GM12878 (cell line): ENCODE measurements at regions of chr2 and their contacts with region 1.

Region 1: DNA sequence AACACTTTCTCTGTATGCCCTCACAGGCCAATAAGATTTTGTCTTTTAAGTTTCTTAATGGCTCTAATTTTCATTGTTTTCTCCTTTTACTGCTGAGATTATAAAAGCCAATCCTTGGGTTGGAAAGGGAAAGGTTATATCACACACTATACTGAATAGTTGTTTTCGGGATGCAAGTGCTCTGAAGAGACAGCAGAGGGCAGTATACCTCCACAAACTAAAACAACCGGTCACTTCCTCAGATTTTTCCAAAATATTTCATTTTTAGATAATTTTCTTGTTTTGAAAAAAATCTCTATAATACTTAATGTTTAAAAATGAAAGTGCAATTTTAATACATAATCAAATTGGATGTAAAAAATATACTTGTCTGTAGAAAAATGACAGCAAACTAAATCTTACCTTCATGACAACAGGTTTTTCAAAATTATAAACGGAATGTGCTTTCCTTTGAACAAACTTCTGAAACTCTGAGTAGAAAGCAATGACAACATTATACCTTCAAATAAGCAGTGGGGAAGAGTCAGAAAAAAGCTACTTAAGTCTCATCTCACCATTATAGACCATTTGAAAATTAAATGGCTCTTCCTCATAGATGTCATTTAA is 82.7 kb downstream of the ORC4 start:
- DNase-seq: no peak
- ATAC-seq: peak; percentile 77
- H3K4me3 ChIP-seq: no peak overlapping the region
- H3K27ac ChIP-seq: no peak overlapping the region
- H3K4me1 ChIP-seq: no peaks in the 10 kb centered on the region
- H3K27me3 ChIP-seq: no peaks in the 10 kb centered on the region
- CTCF ChIP-seq: peak; percentile 75 to 80 (median 79)
- EP300 ChIP-seq: no peak
- POLR2A ChIP-seq: no peak
- RAD21 ChIP-seq: peak; percentile 78

Region 2: DNA sequence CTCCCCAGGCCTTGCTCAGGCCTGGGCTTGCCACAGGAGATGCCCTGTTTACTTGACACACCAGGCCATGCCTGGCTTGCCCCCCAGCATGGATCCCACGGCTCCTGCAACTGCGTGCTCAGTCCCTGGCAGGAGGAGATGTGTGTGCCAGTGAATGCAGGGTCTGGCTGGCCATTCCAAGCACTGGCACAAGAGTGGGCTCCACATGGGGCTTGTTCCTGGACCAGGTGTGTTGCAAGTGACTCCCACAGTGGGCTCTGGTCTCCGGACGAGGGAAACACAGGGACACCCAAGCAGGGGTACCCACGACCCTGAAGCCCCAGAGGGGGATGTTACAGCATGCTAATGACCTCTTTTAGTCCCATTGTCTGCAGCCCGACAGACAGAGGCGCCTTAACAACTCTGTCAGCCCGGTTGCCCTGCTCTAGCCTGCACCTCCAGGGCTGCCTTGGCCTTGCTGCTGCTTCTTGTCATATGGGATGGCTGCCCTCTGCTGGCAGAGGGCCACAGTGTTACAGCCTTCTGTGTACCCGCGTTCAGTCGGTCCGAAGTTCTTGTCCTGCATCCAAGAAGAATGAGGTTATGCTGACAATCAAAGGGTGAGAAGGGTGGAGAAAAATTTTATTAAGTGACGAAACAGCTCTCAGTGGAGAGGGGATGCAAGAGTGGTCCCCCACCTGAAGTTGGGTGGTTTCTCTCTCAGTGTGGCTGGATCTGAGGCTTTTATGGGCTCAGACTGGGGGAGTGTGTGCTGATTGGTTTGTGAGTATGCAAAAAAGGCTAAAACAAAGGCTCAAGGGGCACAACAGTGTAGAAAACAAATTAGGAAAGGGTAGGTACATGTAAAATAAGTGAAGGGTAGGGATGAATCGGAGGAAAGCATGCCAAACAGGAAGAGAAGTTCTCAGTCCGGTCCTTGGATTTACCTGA is 263.5 kb after region 1 on chr2:
- CTCF ChIA-PET with region 1: interaction called, 4 read pairs
- POLR2A ChIA-PET with region 1: no interaction called
- RAD21 ChIA-PET with region 1: no interaction called
- SMC1A ChIA-PET with region 1: no interaction called
- in situ Hi-C with region 1: no loop called
- intact Hi-C with region 1: loop called (anchors 5 kb)
- DNase-seq: no peak
- ATAC-seq: peak; percentile 85
- H3K4me3 ChIP-seq: no peak overlapping the region
- H3K27ac ChIP-seq: no peak overlapping the region
- H3K4me1 ChIP-seq: no peaks in the 10 kb centered on the region
- H3K27me3 ChIP-seq: no peaks in the 10 kb centered on the region
- CTCF ChIP-seq: peak in 2 of 3 experiments; percentile 47 to 51; a peak in 4 of 6 replicates
- EP300 ChIP-seq: no peak
- POLR2A ChIP-seq: no peak
- RAD21 ChIP-seq: peak; percentile 45

Region 3: DNA sequence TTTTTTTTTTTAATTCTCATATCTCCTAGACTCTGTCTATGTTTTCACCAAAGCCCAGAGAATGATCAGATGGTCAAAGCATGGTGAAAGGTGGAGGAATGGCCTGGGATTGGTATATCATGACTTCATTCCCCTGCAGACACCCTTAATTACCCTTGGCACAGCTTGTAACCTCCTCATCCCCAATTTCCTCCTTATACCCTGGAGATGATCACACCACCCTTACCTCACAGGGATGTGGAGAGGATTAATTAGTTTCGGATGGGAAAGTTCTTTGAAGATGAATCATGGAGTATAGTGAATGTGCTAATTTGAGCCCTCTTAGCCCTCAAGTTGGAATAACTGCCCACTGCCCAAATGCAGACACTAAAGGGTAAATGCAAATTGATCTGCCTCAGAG is 1254.6 kb after region 1 on chr2:
- CTCF ChIA-PET with region 1: no interaction called
- POLR2A ChIA-PET with region 1: no interaction called
- RAD21 ChIA-PET with region 1: no interaction called
- SMC1A ChIA-PET with region 1: no interaction called
- in situ Hi-C with region 1: no loop called
- intact Hi-C with region 1: no loop called
- DNase-seq: no peak
- ATAC-seq: no peak
- H3K4me3 ChIP-seq: no peak overlapping the region
- H3K27ac ChIP-seq: no peak overlapping the region
- H3K4me1 ChIP-seq: no peaks in the 10 kb centered on the region
- H3K27me3 ChIP-seq: no peaks in the 10 kb centered on the region
- CTCF ChIP-seq: no peak
- EP300 ChIP-seq: no peak
- POLR2A ChIP-seq: no peak
- RAD21 ChIP-seq: no peak